ENCODE measurements at regions of chr13 and their contacts with region 1.

Region 1: DNA sequence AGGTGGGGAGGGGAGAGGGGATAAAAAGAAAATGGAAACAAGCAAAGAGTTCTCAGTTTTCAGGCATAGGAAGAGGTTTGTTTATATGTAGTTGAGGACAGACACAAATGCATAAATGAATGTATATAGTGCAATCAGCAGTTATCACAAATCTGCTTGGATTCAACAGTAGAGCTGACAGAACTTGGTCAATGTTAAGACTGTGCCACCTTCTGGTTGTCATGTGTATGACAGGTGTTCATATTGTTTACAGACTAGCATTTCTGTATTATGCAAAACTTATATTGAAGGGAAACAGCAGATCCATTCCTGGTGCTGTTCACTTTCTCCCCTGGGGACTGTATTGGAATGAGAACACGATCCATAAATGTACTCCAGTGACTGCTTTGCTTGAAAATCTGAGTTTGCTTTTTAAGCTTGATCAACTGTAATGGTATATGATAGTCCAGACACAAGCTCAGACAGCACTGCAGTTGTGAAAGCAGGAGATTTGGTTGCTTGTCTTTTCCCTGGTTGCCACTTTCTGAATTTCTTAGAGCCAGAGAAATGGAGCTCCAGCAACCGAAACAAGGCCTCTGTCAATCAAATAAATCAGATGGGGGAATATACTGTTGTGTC is 319.5 kb upstream of the OBI1 start:
- DNase-seq: peak; percentile 36
- ATAC-seq: peak; percentile 85
- H3K4me3 ChIP-seq: no peak overlapping the region
- H3K27ac ChIP-seq: no peak overlapping the region
- H3K4me1 ChIP-seq: no peaks in the 10 kb centered on the region
- H3K27me3 ChIP-seq: no peaks in the 10 kb centered on the region
- CTCF ChIP-seq: peak; percentile 55; the same call in 1 of the 2 replicates

Region 2: DNA sequence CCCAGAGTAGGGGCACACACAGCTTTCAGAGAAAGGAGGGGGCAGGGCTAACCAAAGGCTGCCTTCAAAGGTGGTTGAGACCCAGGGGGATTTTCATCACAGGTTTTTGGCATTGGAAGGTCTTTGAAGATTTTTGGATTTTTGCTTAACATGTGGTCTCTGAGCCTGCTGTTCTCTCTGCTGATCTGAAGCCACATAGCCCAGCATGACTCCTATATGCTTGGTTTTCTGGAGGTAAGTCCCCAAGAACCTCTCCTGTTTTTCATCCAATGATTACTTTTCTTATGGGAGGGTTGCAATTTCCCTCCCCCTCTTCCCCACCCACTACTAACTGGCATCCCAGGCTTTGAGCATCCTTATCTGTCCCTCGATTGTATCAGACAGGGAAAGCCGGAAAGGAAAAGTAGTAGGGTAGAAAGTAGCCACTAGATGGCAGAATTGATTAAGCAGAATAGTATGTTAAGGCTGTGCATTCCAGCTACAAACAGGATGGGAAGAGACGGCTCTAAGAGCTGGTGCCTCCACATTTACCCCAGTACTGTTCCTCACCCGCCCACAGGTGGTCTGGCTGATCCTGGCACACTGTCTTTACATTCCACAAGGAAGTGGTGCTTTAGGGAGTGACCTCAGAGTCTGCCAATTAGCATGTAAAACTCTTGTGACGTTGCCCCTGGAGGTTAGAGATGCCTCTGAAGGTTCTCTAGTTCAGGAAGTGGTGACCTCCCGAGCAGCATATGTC is 840.9 kb before region 1 on chr13:
- CTCF ChIA-PET with region 1: interaction called, 10 read pairs
- POLR2A ChIA-PET with region 1: no interaction called
- in situ Hi-C with region 1: no loop called
- intact Hi-C with region 1: loop called (anchors 2 kb)
- DNase-seq: peak; percentile 30
- ATAC-seq: peak; percentile 90
- H3K4me3 ChIP-seq: no peak overlapping the region
- H3K27ac ChIP-seq: no peak overlapping the region
- H3K4me1 ChIP-seq: no peaks in the 10 kb centered on the region
- H3K27me3 ChIP-seq: no peaks in the 10 kb centered on the region
- CTCF ChIP-seq: peak; percentile 73

Region 3: DNA sequence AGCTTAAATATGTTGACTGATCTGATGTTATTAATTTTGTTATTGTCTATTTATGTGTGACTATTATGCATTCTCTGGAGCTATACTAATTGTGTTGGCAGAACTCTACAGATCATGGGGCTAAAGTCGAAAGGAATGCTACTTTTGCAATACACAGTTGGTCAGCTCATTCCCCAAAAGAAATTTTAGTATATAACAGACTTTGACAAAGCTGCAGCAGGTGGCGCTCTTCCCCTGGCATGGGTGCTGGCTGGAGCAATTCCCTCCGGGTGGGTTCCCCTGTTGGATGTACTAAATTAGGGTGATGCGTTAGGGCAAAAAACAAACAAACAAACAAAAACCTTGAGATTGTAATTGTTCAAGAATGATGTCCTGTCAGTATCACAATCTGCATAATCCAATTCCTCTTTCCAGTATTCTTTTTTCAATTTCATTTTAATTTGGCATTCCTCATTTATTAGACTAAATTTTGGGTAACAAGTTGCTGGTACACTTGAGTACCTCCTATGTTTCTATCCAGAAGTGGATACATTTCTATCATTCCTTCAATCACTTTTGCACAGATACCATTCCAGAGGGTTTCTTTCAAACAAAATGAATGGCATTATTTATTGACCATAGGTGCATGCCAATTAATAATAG is 737.1 kb before region 1 on chr13:
- CTCF ChIA-PET with region 1: no interaction called
- POLR2A ChIA-PET with region 1: no interaction called
- in situ Hi-C with region 1: no loop called
- intact Hi-C with region 1: loop called (anchors 10 kb)
- DNase-seq: peak; percentile 2
- ATAC-seq: no peak
- H3K4me3 ChIP-seq: no peak overlapping the region
- H3K27ac ChIP-seq: no peak overlapping the region
- H3K4me1 ChIP-seq: no peaks in the 10 kb centered on the region
- H3K27me3 ChIP-seq: no peaks in the 10 kb centered on the region; the same call in 1 of the 2 replicates
- CTCF ChIP-seq: peak; percentile 73

Region 4: GRCh38 chr13:78759704-78760103 is 218.8 kb before region 1 on chr13:
- CTCF ChIA-PET with region 1: no interaction called
- POLR2A ChIA-PET with region 1: no interaction called
- in situ Hi-C with region 1: no loop called
- intact Hi-C with region 1: no loop called
- DNase-seq: no peak
- ATAC-seq: no peak
- H3K4me3 ChIP-seq: no peak overlapping the region
- H3K27ac ChIP-seq: no peak overlapping the region
- H3K4me1 ChIP-seq: no peaks in the 10 kb centered on the region
- H3K27me3 ChIP-seq: no peaks in the 10 kb centered on the region
- CTCF ChIP-seq: peak; percentile 16; the same call in 1 of the 2 replicates

Region 5: GRCh38 chr13:78867655-78868054 is 110.8 kb before region 1 on chr13:
- CTCF ChIA-PET with region 1: no interaction called
- POLR2A ChIA-PET with region 1: no interaction called
- in situ Hi-C with region 1: no loop called
- intact Hi-C with region 1: no loop called
- DNase-seq: no peak
- ATAC-seq: no peak
- H3K4me3 ChIP-seq: no peak overlapping the region
- H3K27ac ChIP-seq: no peak overlapping the region
- H3K4me1 ChIP-seq: no peaks in the 10 kb centered on the region
- H3K27me3 ChIP-seq: no peaks in the 10 kb centered on the region
- CTCF ChIP-seq: no peak

Region 6: GRCh38 chr13:78881751-78882150 is 96.7 kb before region 1 on chr13:
- CTCF ChIA-PET with region 1: no interaction called
- POLR2A ChIA-PET with region 1: no interaction called
- in situ Hi-C with region 1: no loop called
- intact Hi-C with region 1: no loop called
- DNase-seq: no peak
- ATAC-seq: no peak
- H3K4me3 ChIP-seq: no peak overlapping the region
- H3K27ac ChIP-seq: no peak overlapping the region
- H3K4me1 ChIP-seq: no peaks in the 10 kb centered on the region
- H3K27me3 ChIP-seq: no peaks in the 10 kb centered on the region
- CTCF ChIP-seq: no peak

Region 7: GRCh38 chr13:79128158-79128557 is 149.7 kb after region 1 on chr13:
- CTCF ChIA-PET with region 1: no interaction called
- POLR2A ChIA-PET with region 1: no interaction called
- in situ Hi-C with region 1: no loop called
- intact Hi-C with region 1: no loop called
- DNase-seq: no peak
- ATAC-seq: no peak
- H3K4me3 ChIP-seq: no peak overlapping the region
- H3K27ac ChIP-seq: no peak overlapping the region
- H3K4me1 ChIP-seq: no peaks in the 10 kb centered on the region
- H3K27me3 ChIP-seq: no peaks in the 10 kb centered on the region
- CTCF ChIP-seq: no peak

Measured in Panc1 (cell line).